ENCODE measurements at regions of chr5 and their contacts with region 1.

Region 1: DNA sequence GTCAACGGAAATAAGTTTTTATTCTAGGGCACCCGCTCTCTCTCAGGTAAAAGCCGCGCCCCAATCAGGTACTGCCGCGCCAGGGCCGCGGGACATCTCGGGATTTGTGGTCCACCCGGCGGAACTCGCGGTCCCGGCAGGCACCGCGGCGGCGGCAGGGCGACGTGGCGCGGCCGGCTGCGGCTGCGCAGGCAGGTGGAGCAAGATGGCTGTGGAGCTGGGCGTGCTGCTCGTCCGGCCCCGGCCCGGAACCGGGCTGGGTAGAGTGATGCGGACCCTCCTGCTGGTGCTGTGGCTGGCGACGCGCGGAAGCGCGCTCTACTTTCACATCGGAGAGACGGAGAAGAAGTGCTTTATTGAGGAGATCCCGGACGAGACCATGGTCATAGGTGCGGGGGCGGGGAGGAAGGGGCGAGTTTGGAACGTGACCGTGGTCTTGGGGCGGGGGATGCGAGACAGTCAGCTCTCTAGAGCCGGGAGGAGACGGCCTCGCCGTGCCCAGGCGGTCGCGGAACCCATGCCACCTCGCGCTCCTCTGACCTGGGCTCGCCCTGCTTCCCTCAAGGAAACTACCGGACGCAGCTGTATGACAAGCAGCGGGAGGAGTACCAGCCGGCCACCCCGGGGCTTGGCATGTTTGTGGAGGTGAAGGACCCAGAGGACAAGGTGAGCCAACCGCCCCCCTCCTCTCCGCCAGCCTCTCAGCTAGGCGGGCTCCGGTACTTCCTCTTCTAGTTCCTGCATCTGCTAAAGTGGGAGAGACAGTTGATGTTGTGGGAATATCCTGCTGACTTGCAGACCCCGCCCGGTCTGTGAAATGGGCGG is at the start of gene TMED9:
- DNase-seq: peak; percentile 29
- H3K4me3 ChIP-seq: peak within 1 kb of the TSS; percentile 95
- H3K27ac ChIP-seq: peak within 1 kb of the TSS; percentile 88
- H3K27me3 ChIP-seq: peaks cover 10% of the 10 kb centered on the region
- CTCF ChIP-seq: no peak
- polyA plus RNA-seq, gene TMED9: 307 and 376 TPM in 2 replicates

Region 2: GRCh38 chr5:177351385-177352329 is 240.6 kb before region 1 on chr5 and contains the start of gene LMAN2:
- CTCF ChIA-PET with region 1: no interaction called
- POLR2A ChIA-PET with region 1: no interaction called
- DNase-seq: peak; percentile 91
- H3K4me3 ChIP-seq: peak within 1 kb of the TSS; percentile 100
- H3K27ac ChIP-seq: peak within 1 kb of the TSS; percentile 98
- H3K27me3 ChIP-seq: peaks cover 2% of the 10 kb centered on the region
- CTCF ChIP-seq: no peak
- polyA plus RNA-seq, gene LMAN2: 150 and 212 TPM in 2 replicates

Region 3: GRCh38 chr5:177546258-177546741 is 45.9 kb before region 1 on chr5:
- CTCF ChIA-PET with region 1: interaction called, 4 read pairs
- POLR2A ChIA-PET with region 1: interaction called, 14 read pairs
- DNase-seq: peak; percentile 95
- H3K4me3 ChIP-seq: no peak overlapping the region
- H3K27ac ChIP-seq: peak overlapping the region; percentile 97
- H3K27me3 ChIP-seq: no peaks in the 10 kb centered on the region
- CTCF ChIP-seq: peak; percentile 14; the same call in 1 of the 2 replicates

Region 4: GRCh38 chr5:177607452-177608192 is 15.4 kb after region 1 on chr5:
- CTCF ChIA-PET with region 1: interaction called, 13 read pairs
- POLR2A ChIA-PET with region 1: interaction called, 8 read pairs
- DNase-seq: peak; percentile 69
- H3K4me3 ChIP-seq: no peak overlapping the region
- H3K27ac ChIP-seq: no peak overlapping the region
- H3K27me3 ChIP-seq: no peaks in the 10 kb centered on the region
- CTCF ChIP-seq: peak; percentile 93

Region 5: DNA sequence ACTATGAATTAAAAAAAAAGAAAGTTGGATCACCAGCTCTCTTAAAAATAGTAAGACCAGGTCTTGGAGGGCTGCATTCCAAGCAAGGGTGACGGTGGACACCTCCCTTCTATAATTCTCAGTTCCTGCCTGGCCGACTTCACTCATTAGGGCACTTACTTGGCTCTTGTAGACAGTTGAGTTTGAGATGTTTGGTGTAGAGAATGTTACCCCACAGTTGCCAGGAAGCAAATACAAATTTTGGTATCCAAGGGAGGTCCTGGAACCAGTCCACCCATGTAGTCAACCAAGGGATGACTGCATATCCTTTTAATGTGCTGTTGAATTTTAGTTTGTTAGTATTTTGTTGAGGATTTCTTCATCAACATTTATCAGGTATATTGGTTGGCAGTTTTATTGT is 28.3 kb after region 1 on chr5:
- CTCF ChIA-PET with region 1: no interaction called
- POLR2A ChIA-PET with region 1: no interaction called
- DNase-seq: no peak
- H3K4me3 ChIP-seq: no peak overlapping the region
- H3K27ac ChIP-seq: no peak overlapping the region
- H3K27me3 ChIP-seq: no peaks in the 10 kb centered on the region
- CTCF ChIP-seq: no peak

Measured in AG04450 (cell line).